ENCODE measurements at regions of chr9 and their contacts with region 1.

Region 1: DNA sequence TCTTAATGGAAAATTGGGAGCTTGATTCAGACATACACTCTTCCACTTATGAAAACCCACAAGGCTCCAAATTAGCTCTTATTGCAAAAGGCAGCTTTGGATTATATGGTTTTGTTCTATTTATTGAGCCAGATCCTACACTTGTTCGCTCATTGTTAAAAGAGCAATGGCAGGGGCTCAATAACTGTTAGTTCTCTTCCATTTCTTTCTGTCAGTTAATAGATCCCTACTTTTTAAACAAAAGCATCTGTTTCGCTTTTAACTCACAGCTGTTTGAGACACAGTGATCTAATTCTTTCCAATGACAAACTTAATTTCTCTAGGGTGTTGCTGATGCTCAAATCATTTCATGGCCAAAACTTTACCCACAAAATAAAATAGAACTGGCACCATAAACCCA is 11.7 kb downstream of the C5 start:
- DNase-seq: no peak
- ATAC-seq: no peak
- H3K4me3 ChIP-seq: no peak overlapping the region
- H3K27ac ChIP-seq: no peak overlapping the region
- H3K4me1 ChIP-seq: no peaks in the 10 kb centered on the region
- H3K27me3 ChIP-seq: no peaks in the 10 kb centered on the region
- CTCF ChIP-seq: no peak
- POLR2A ChIP-seq: no peak

Region 2: GRCh38 chr9:120742951-120743416 is 295.4 kb before region 1 on chr9:
- intact Hi-C with region 1: no loop called
- DNase-seq: peak; percentile 39 to 72 (median 69)
- ATAC-seq: peak; percentile 89 to 97 (median 96)
- H3K4me3 ChIP-seq: no peak overlapping the region
- H3K27ac ChIP-seq: no peak overlapping the region
- H3K4me1 ChIP-seq: no peaks in the 10 kb centered on the region
- H3K27me3 ChIP-seq: no peaks in the 10 kb centered on the region
- CTCF ChIP-seq: peak; percentile 75 to 94 (median 84)
- POLR2A ChIP-seq: no peak

Region 3: DNA sequence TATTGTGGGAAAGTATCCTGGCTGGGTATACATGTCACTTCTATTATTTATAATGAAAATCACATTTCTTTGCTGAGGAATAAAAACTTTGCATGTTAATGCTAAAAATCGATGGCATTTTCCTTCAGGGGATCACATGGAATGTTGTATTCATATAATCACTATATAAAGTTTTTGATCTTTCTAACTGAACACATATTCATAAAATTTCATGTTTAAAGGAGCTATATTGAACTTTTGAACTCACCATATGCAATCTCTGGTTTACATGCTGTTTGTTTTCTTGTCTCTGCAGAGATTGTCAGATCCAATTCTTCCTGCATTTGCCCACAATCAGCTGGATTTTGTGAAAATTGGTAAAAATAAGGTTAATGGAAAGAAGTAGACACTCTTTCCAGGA is 78.4 kb before region 1 on chr9:
- intact Hi-C with region 1: loop called in 1 of 2 experiments (anchors 5 kb)
- DNase-seq: no peak
- ATAC-seq: no peak
- H3K4me3 ChIP-seq: no peak overlapping the region
- H3K27ac ChIP-seq: no peak overlapping the region
- H3K4me1 ChIP-seq: no peaks in the 10 kb centered on the region
- H3K27me3 ChIP-seq: no peaks in the 10 kb centered on the region
- CTCF ChIP-seq: no peak
- POLR2A ChIP-seq: no peak

Measured in right lobe of liver (tissue), 6 donors.